Activated CD4-positive, alpha-beta T cell treated with anti-CD3 and anti-CD28 coated beads for 36 hours (primary cell): ENCODE measurements at regions of chr19 and their contacts with region 1.

Region 1: GRCh38 chr19:12610540-12611360 is at the starts of genes ZNF490 and ZNF791:
- DNase-seq: peak; percentile 98
- ATAC-seq: peak; percentile 91
- H3K4me3 Mint-ChIP-seq: peak within 1 kb of the TSS; percentile 94
- H3K27ac Mint-ChIP-seq: peak within 1 kb of the TSS; percentile 99
- H3K4me1 Mint-ChIP-seq: peaks cover 31% of the 10 kb centered on the region
- H3K27me3 Mint-ChIP-seq: no peaks in the 10 kb centered on the region
- total RNA-seq, gene ZNF490: 7.7 to 8.7 TPM
- total RNA-seq, gene ZNF791: 16.1 to 18.1 TPM

Region 2: DNA sequence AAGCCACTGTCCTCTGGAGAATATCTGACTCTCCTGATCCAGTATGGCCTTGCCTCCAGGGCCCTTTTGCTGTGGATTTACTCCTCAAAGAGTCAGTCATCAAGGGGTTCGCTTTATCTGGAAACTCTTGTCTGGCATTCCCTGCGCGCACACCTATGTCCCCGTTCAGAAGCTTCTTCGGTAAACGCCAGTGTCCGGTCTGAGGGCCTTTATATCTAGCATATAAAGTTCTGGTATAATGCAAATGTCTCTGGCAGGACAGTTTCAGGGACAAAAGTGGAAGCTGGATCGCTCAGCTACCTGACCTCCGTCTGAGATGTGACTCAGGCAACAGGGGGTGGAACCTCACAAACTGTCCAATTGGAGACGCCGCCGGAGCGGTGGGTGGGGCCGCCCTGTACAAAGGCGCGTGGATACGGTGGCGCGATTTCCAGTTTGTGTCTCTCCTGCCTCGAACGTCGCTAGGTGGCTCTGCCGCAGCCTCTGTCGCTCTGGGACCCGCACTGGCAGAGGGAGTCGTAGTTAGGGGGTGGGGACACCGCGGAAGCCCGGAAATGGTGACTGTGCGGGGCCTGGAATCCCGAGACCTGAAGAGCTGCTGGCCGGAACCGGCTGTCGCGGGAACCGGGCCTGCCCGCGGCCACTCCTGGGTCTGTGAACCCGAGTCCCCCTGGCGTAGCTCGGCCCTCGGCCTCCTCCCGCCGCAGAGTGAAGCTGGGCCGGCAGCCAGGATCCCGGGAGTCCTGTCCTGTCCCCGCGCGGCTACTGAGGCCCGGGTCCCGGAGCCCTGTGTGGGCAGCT is 115.5 kb before region 1 on chr19:
- CTCF ChIA-PET with region 1: no interaction called
- POLR2A ChIA-PET with region 1: interaction called, 4 read pairs
- intact Hi-C with region 1: loop called in 1 of 2 experiments (anchors 1 kb)
- DNase-seq: peak; percentile 97
- ATAC-seq: peak; percentile 100
- H3K4me3 Mint-ChIP-seq: peak overlapping the region; percentile 75
- H3K27ac Mint-ChIP-seq: peak overlapping the region; percentile 71
- H3K4me1 Mint-ChIP-seq: peaks cover 7% of the 10 kb centered on the region
- H3K27me3 Mint-ChIP-seq: no peaks in the 10 kb centered on the region

Region 3: GRCh38 chr19:12639901-12640613 is 29.3 kb after region 1 on chr19:
- CTCF ChIA-PET with region 1: interaction called, 6 read pairs
- POLR2A ChIA-PET with region 1: interaction called, 4 read pairs
- intact Hi-C with region 1: loop called in 1 of 2 experiments (anchors 1 kb)
- DNase-seq: peak; percentile 95
- ATAC-seq: peak; percentile 94
- H3K4me3 Mint-ChIP-seq: peak overlapping the region; percentile 70
- H3K27ac Mint-ChIP-seq: peak overlapping the region; percentile 85
- H3K4me1 Mint-ChIP-seq: peaks cover 23% of the 10 kb centered on the region
- H3K27me3 Mint-ChIP-seq: no peaks in the 10 kb centered on the region

Region 4: DNA sequence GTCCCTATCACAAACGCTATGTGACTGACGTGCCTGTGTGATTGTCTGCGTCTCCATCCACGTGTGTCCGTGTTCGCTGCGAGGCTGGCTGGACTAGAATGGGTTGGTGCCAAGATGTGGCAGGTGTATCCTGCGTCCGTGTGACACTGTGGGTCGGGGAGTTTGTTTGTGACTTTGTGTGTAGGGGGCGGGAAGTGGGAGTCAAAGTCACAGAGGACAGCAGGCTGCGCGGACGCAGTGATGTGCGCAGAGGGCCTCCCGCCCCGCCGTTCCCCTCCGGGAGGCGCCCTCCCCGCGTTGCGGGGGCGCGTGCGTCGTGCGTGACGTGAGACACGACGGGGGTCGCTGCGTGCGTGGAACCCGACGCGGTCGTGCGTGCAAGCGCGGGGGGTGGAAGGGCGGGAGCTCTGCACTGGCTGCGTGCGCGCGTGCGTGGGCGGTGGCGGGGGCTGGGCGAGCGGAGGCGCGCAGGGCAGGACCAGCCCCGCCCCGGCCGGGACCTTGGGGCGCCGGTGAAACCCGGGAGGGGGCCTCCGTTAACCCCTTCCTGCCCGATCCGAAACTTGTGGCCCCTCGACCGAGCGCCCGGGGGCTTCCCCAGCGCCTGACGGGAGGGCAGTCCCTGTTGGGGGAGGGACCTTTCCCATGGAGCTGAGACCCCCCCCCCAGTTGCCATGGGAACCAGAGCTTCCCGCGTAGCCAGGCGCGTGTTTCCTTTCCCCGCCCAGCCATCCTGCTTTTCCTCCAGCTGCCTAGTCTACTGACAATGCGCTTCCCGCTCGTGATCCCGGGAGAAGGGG is 171.7 kb after region 1 on chr19:
- CTCF ChIA-PET with region 1: no interaction called
- POLR2A ChIA-PET with region 1: no interaction called
- intact Hi-C with region 1: loop called in 1 of 2 experiments (anchors 5 kb)
- DNase-seq: peak; percentile 95
- ATAC-seq: peak; percentile 40
- H3K4me3 Mint-ChIP-seq: peak overlapping the region; percentile 74
- H3K27ac Mint-ChIP-seq: peak overlapping the region; percentile 98
- H3K4me1 Mint-ChIP-seq: peaks cover 33% of the 10 kb centered on the region
- H3K27me3 Mint-ChIP-seq: no peaks in the 10 kb centered on the region

Region 5: DNA sequence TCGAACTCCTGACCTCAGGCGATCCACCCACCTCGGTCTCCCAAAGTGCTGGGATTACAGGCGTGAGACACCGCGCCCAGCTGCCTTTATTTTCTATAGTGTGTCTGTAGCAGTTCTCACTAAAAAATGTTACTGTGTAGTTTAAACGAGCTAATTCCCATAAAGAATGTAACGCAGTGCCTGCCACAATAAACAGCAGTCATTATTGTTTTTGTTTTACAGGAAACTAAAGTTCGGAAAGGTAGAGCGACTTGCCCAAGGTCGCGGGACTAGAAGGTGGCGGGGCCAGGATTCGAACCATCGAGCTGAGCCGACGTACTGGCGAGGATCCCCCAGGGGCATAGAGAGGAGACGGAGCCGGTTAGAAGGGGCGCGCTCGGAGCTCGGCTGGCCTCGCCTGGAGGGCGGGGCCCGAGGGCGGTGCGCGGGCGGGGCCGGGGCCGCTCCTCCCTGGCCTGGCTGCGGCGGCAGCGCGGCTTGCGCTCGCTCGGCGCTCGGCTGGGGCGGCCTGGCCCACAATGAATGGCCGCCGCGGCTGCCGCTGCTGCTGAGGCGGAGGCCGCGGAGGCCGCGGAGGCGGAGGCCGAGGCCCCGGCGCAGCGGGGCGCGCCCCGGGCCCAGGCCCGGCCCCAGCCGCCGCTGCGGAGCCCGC is 507.1 kb after region 1 on chr19 and contains the start of gene NACC1:
- CTCF ChIA-PET with region 1: no interaction called
- POLR2A ChIA-PET with region 1: no interaction called
- intact Hi-C with region 1: loop called in 1 of 2 experiments (anchors 5 kb)
- DNase-seq: peak; percentile 95
- ATAC-seq: peak; percentile 85
- H3K4me3 Mint-ChIP-seq: peak within 1 kb of the TSS; percentile 87
- H3K27ac Mint-ChIP-seq: peak within 1 kb of the TSS; percentile 95
- H3K4me1 Mint-ChIP-seq: peaks cover 49% of the 10 kb centered on the region
- H3K27me3 Mint-ChIP-seq: no peaks in the 10 kb centered on the region
- total RNA-seq, gene NACC1: 77.5 to 84.5 TPM